GM18951 (cell line): ENCODE measurements at regions of chr2 and their contacts with region 1.

Region 1: GRCh38 chr2:38586931-38587330 is 15.8 kb downstream of the HNRNPLL start:
- POLR2A ChIP-seq: no peak

Region 2: GRCh38 chr2:38720613-38721241 is 133.8 kb after region 1 on chr2:
- in situ Hi-C with region 1: loop called (anchors 5 kb)
- POLR2A ChIP-seq: no peak